ENCODE measurements at regions of chr1 and their contacts with region 1.

Region 1: DNA sequence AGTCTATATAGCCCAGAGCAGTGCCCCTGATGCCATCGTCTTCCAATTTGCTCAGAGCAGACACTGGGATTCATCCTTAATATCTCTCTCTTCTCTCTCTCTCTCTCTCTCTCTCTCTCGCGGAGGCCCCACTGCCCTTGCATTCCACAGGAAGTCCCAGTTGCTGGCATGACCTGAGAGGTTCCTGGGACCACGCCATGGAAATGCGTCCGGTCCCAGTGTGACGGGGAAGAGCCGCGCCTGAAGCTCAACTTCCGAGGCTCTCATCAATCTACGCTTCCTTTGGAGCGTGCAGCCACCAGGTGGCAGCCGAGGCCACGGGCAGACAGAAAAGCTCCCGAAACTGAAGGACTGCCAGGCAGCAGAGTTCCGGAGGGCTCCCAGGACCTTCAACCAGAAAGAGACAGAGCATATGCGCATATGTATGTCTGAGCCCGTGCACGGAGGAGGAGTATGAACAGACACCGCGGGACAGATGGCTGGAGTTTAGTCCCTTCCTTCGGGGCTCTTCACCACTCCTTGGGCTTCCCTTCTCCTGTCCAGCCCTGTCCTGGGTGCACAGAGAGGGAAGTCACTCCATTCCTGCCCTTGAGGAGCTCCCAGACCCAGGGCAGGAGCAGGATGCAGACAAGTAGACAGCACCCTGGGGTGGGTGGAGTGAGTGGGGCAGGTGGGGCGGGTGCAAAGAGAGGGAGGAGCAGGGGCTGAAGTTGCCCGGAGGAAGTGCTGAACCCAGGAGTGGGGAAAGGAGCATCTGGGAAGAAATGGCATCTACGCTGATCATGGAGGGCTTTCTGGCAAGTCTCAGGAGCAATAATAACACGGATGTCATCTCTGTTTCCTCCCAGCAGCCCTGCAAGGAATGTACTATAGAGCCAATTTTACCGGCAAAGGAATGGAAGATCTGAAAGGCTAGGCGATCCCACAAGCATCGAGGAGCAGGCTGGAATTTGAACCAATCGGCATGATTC is 10.5 kb downstream of the PDZK1IP1 start:
- DNase-seq: peak; percentile 88 to 89
- ATAC-seq: peak; percentile 87 to 94 (median 90)
- H3K4me3 ChIP-seq: peak overlapping the region in 9 of 10 donors; percentile 27 to 58 (median 49)
- H3K27ac ChIP-seq: no peak overlapping the region
- H3K4me1 ChIP-seq: peaks cover 3 to 19% (median 13%) of the 10 kb centered on the region in 9 donors
- H3K27me3 ChIP-seq: peaks cover 0 to 40% (median 13%) of the 10 kb centered on the region in 7 donors
- CTCF ChIP-seq: peak; percentile 83 to 96 (median 90)

Region 2: DNA sequence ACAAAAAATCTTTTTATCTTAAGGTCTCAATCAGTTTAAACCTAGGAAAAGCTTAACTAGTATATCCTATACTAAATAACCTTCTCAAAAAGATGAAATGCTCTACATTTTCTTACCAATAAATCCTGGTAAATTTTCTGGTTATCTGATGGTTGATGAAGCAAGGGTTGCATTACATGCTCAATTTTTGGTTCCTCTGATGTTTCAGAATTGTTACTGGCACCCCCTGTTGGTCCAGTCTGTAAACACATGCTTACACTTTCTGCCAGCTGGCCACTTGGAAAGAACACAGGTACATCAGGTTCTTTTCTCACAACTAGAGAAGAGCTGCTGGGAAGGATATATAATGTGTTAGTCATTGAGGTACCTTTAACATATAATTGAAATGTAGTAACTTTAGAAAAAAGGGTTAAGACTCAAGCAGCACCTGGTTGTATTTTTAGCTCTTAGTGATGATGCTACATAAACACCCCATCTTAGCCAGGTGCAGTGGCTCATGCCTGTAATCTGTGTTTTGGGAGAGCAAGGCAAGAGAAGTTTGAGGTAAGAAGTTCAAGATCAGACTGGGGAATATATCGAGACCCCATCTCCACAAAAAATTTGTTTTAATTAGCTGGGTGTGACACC is 83.6 kb after region 1 on chr1:
- intact Hi-C with region 1: loop called in 3 of 10 experiments (anchors 1 to 5 kb)
- DNase-seq: peak in 1 of 2 donors; percentile 47
- ATAC-seq: peak in 1 of 8 donors; percentile 49
- H3K4me3 ChIP-seq: no peak overlapping the region
- H3K27ac ChIP-seq: no peak overlapping the region
- H3K4me1 ChIP-seq: no peaks in the 10 kb centered on the region
- H3K27me3 ChIP-seq: no peaks in the 10 kb centered on the region
- CTCF ChIP-seq: peak; percentile 25 to 76 (median 63)

Region 3: GRCh38 chr1:47378147-47378546 is 198.8 kb after region 1 on chr1:
- intact Hi-C with region 1: no loop called
- DNase-seq: no peak
- ATAC-seq: no peak
- H3K4me3 ChIP-seq: no peak overlapping the region
- H3K27ac ChIP-seq: no peak overlapping the region
- H3K4me1 ChIP-seq: peaks cover 0 to 9% (median 0%) of the 10 kb centered on the region in 9 donors
- H3K27me3 ChIP-seq: no peaks in the 10 kb centered on the region
- CTCF ChIP-seq: no peak

Region 4: DNA sequence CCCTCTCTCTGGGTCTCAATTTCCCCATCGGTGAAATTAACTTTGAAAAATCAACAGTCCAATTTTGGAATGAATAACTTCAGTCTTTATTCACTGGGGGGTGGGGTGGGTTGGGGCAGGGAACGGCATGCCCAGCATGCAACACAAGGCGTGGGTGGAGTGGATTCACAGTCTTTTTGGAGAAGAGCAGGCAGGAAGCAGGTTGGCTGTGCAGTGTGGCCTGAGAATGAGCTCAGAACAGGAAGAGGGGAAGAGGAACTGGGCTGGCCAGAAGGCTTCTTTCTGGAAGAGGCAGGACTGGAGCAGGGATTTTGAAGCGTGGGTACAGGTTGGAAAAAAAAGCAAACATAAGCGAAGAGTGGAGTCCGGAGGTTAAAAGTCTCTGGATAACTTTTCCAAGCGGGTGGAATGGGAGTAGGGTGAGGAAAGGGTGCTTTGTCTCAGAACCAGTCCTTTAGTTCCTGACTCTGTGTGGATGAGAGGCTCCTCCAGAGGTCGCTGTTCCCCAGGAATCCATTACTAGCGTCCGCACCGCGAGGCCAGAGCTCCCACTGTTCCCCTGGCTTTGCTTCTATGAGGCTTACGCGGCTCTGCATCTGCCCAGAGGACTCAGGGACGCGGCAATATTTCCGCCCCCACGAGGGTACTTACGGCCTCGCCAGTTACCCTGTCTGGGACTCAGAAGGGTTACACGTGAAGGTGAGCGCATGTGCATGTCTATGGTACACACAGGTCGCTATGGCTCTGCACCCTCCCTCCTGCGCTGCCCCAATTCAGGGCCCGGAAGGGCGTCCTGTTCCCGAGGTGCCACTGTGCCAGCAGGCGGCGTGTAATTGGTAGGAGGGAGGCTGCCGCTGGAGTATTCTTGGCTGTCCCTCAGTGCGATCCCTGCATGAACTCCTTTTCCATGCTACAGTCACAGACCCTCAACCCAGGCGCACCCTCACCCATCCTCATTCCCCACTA is 253.1 kb after region 1 on chr1:
- intact Hi-C with region 1: loop called in 5 of 10 experiments (anchors 5 to 10 kb)
- DNase-seq: peak; percentile 58 to 78
- ATAC-seq: peak; percentile 57 to 85 (median 82)
- H3K4me3 ChIP-seq: peak overlapping the region in 4 of 10 donors; percentile 16 to 26 (median 20)
- H3K27ac ChIP-seq: peak overlapping the region in 1 of 10 donors; percentile 44
- H3K4me1 ChIP-seq: peaks cover 10 to 50% (median 40%) of the 10 kb centered on the region in 9 donors
- H3K27me3 ChIP-seq: peaks cover 18 to 100% (median 92%) of the 10 kb centered on the region in 7 donors
- CTCF ChIP-seq: peak; percentile 20 to 88 (median 77)

Region 5: DNA sequence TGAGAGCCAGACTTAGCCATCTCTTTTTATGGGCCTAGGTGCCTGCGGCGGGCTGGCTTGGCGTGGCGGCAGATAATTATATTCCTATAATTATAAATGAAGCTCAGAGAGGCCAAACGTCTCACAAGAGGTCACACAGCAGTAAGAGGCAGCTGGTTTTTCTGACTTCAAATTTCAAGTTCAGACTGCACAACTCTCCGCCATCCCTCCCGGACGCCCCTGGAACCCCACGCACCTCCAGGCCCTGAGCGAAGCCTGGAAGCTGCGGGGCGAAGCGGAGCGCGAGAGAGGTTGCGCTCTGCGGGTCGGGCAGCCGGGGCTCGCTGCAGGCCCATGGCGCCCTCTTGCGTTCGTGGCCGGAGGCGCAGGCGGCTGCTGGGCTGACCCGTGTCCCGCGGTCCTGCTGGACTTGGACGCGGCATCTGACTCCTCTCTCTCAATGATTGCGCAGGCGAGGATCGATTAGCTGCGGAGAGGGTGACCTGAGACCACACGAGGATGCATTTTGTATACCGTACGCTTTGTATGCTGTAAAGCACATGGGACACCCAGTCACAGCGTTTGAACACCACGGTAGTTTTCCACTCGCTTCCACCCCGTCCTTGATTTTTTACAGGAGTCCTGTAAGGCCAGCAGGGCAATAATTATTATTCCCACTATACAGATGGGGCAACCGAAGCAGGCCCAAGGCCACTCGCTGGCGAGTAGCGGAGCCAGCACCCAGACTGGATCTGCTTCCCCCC is 531.2 kb after region 1 on chr1:
- intact Hi-C with region 1: loop called in 5 of 10 experiments (anchors 5 kb)
- DNase-seq: peak; percentile 62 to 83
- ATAC-seq: peak; percentile 86 to 93 (median 90)
- H3K4me3 ChIP-seq: peak overlapping the region in 9 of 10 donors; percentile 33 to 52 (median 49)
- H3K27ac ChIP-seq: no peak overlapping the region
- H3K4me1 ChIP-seq: peaks cover 6 to 30% (median 24%) of the 10 kb centered on the region in 9 donors
- H3K27me3 ChIP-seq: peaks cover 21 to 100% (median 98%) of the 10 kb centered on the region in 7 donors
- CTCF ChIP-seq: peak; percentile 94 to 100 (median 99)

Measured in heart right ventricle (tissue), 16 donors.